ENCODE measurements at regions of chr6 and their contacts with region 1.

Region 1: GRCh38 chr6:147390909-147391536 is 117.5 kb upstream of the SAMD5 start:
- DNase-seq: peak; percentile 44
- H3K4me3 Mint-ChIP-seq: no peak overlapping the region
- H3K27ac Mint-ChIP-seq: no peak overlapping the region
- H3K4me1 Mint-ChIP-seq: no peaks in the 10 kb centered on the region
- H3K27me3 Mint-ChIP-seq: no peaks in the 10 kb centered on the region

Region 2: GRCh38 chr6:147654103-147654845 is 263.3 kb after region 1 on chr6:
- CTCF ChIA-PET with region 1: no interaction called
- intact Hi-C with region 1: no loop called
- DNase-seq: no peak
- H3K4me3 Mint-ChIP-seq: no peak overlapping the region
- H3K27ac Mint-ChIP-seq: no peak overlapping the region
- H3K4me1 Mint-ChIP-seq: no peaks in the 10 kb centered on the region
- H3K27me3 Mint-ChIP-seq: peaks cover 4% of the 10 kb centered on the region

Region 3: GRCh38 chr6:148166339-148166968 is 775.4 kb after region 1 on chr6:
- CTCF ChIA-PET with region 1: no interaction called
- intact Hi-C with region 1: loop called (anchors 1 kb)
- DNase-seq: no peak
- H3K4me3 Mint-ChIP-seq: no peak overlapping the region
- H3K27ac Mint-ChIP-seq: no peak overlapping the region
- H3K4me1 Mint-ChIP-seq: no peaks in the 10 kb centered on the region
- H3K27me3 Mint-ChIP-seq: no peaks in the 10 kb centered on the region

Region 4: GRCh38 chr6:148250975-148251685 is 860.1 kb after region 1 on chr6:
- CTCF ChIA-PET with region 1: no interaction called
- intact Hi-C with region 1: loop called (anchors 5 kb)
- DNase-seq: no peak
- H3K4me3 Mint-ChIP-seq: no peak overlapping the region
- H3K27ac Mint-ChIP-seq: no peak overlapping the region
- H3K4me1 Mint-ChIP-seq: no peaks in the 10 kb centered on the region
- H3K27me3 Mint-ChIP-seq: peaks cover 7% of the 10 kb centered on the region

Region 5: GRCh38 chr6:148999929-149000468 is 1609.0 kb after region 1 on chr6:
- CTCF ChIA-PET with region 1: no interaction called
- intact Hi-C with region 1: no loop called
- DNase-seq: no peak
- H3K4me3 Mint-ChIP-seq: no peak overlapping the region
- H3K27ac Mint-ChIP-seq: no peak overlapping the region
- H3K4me1 Mint-ChIP-seq: peaks cover 8% of the 10 kb centered on the region
- H3K27me3 Mint-ChIP-seq: no peaks in the 10 kb centered on the region

Measured in activated naive CD4-positive, alpha-beta T cell treated with anti-CD3 and anti-CD28 coated beads for 36 hours (primary cell).